ENCODE measurements at regions of chr2 and their contacts with region 1.

Region 1: GRCh38 chr2:207819839-207820784 is 50.4 kb upstream of the FZD5 start:
- DNase-seq: peak; percentile 97
- ATAC-seq: peak; percentile 89
- H3K4me3 ChIP-seq: peak overlapping the region; percentile 41 to 55 (median 53)
- H3K27ac ChIP-seq: peak overlapping the region; percentile 94
- H3K4me1 ChIP-seq: peaks cover 100% of the 10 kb centered on the region
- H3K27me3 ChIP-seq: no peaks in the 10 kb centered on the region
- CTCF ChIP-seq: no peak; the same call in 1 of the 2 replicates
- EP300 ChIP-seq: peak in 1 of 2 experiments; percentile 83; a peak in 3 of 4 replicates
- POLR2A ChIP-seq: peak; percentile 68 to 81
- RAD21 ChIP-seq: peak; percentile 40; the same call in 1 of the 2 replicates

Region 2: DNA sequence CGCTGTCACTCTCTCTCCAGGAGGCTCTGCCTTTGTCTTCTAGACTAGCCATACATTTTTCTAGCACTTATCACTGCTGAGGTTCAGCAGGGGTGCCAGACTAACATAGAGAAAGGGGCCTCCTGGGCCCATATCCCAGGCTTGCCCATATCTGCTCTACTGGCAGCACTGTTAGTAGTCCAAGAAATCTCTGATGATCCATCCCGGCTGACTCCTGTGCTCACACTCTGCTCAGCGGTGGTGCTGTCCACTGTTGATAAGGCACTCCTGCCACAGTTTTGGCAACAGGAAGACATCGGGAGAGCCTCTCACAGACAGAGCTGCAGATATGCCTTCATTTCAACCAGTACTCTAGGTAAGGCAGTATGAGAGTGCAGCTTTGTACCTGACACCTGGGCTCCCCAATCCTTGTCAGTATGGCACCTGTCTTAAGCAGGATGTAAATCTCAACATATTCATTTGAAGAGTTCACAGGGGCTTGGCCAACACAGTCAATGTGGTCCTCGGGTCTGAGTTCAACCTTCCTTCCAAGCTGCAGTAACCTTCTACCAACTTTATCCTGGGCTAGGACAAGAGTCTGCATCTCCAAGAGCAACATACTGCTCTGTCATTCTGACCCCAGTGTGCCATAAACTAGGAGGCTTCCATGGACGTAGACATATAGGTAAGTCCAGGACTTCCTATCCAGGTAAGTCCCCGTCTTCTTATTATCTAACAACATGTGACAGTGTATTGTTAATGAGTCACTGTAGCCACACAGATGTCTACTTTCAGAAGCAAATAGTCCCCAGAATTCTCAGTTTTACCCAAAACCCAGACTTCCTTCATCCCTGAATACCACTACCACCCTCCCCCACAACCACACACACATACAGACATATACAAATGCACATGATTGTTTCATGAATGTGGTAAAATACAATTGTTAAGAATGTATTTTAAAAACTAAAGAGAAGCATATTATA is 670.6 kb before region 1 on chr2:
- CTCF ChIA-PET with region 1: no interaction called
- POLR2A ChIA-PET with region 1: no interaction called
- in situ Hi-C with region 1: no loop called
- intact Hi-C with region 1: no loop called
- DNase-seq: no peak
- ATAC-seq: no peak
- H3K4me3 ChIP-seq: no peak overlapping the region
- H3K27ac ChIP-seq: no peak overlapping the region
- H3K4me1 ChIP-seq: no peaks in the 10 kb centered on the region
- H3K27me3 ChIP-seq: no peaks in the 10 kb centered on the region
- CTCF ChIP-seq: no peak
- EP300 ChIP-seq: no peak
- POLR2A ChIP-seq: no peak
- RAD21 ChIP-seq: no peak

Region 3: GRCh38 chr2:207782238-207783030 is 37.7 kb before region 1 on chr2:
- CTCF ChIA-PET with region 1: no interaction called
- POLR2A ChIA-PET with region 1: interaction called, 16 read pairs
- in situ Hi-C with region 1: no loop called
- intact Hi-C with region 1: no loop called
- DNase-seq: peak; percentile 92
- ATAC-seq: peak; percentile 96
- H3K4me3 ChIP-seq: no peak overlapping the region
- H3K27ac ChIP-seq: peak overlapping the region; percentile 1
- H3K4me1 ChIP-seq: peaks cover 96% of the 10 kb centered on the region
- H3K27me3 ChIP-seq: no peaks in the 10 kb centered on the region
- CTCF ChIP-seq: peak; percentile 13; the same call in 1 of the 2 replicates
- EP300 ChIP-seq: peak in 1 of 2 experiments; percentile 63; a peak in 2 of 4 replicates
- POLR2A ChIP-seq: no peak
- RAD21 ChIP-seq: peak; percentile 21; the same call in 1 of the 2 replicates

Region 4: DNA sequence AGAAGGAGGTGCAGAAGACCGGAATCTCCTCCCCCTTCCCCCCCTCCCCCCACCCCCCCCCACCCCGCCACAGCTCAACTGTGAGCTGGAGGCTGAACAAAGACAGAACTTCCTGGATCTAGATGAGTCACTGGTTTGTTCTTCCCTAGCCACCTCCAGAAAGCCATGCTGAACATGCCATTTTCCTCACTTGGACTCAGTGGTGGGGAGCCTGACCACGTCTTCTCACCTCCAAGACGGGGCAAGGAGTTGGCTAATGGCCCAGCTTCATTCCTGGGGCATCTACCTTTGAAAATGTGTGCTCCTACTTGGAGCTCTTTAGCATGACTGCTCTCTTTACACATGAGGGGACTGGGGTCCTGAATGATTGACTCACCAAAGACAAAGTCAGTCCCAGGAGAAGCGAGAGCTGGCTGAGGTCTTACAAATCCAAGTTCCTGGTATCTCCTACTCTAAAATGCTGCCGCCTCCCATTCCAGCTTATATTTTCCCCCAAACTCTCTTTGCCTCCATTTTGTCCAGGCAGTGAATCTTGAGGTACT is 27.8 kb before region 1 on chr2:
- CTCF ChIA-PET with region 1: no interaction called
- POLR2A ChIA-PET with region 1: interaction called, 42 read pairs
- in situ Hi-C with region 1: no loop called
- intact Hi-C with region 1: no loop called
- DNase-seq: peak; percentile 84
- ATAC-seq: peak; percentile 66
- H3K4me3 ChIP-seq: peak overlapping the region in 1 of 3 experiments; percentile 49; a peak in 2 of 6 replicates
- H3K27ac ChIP-seq: peak overlapping the region; percentile 82
- H3K4me1 ChIP-seq: peaks cover 73% of the 10 kb centered on the region
- H3K27me3 ChIP-seq: no peaks in the 10 kb centered on the region
- CTCF ChIP-seq: no peak
- EP300 ChIP-seq: peak in 1 of 2 experiments; percentile 16; a peak in 1 of 4 replicates
- POLR2A ChIP-seq: 0 out of 4 replicates have a peak, but pooled peaks have one; percentile 44 to 53
- RAD21 ChIP-seq: no peak

Region 5: GRCh38 chr2:207805566-207806226 is 14.4 kb before region 1 on chr2:
- CTCF ChIA-PET with region 1: no interaction called
- POLR2A ChIA-PET with region 1: interaction called, 49 read pairs
- in situ Hi-C with region 1: no loop called
- intact Hi-C with region 1: loop called (anchors 1 kb)
- DNase-seq: peak; percentile 39
- ATAC-seq: peak; percentile 15; the same call in 1 of the 3 replicates
- H3K4me3 ChIP-seq: no peak overlapping the region
- H3K27ac ChIP-seq: peak overlapping the region; percentile 43
- H3K4me1 ChIP-seq: peaks cover 61% of the 10 kb centered on the region
- H3K27me3 ChIP-seq: no peaks in the 10 kb centered on the region
- CTCF ChIP-seq: no peak
- EP300 ChIP-seq: no peak
- POLR2A ChIP-seq: no peak
- RAD21 ChIP-seq: no peak

Region 6: DNA sequence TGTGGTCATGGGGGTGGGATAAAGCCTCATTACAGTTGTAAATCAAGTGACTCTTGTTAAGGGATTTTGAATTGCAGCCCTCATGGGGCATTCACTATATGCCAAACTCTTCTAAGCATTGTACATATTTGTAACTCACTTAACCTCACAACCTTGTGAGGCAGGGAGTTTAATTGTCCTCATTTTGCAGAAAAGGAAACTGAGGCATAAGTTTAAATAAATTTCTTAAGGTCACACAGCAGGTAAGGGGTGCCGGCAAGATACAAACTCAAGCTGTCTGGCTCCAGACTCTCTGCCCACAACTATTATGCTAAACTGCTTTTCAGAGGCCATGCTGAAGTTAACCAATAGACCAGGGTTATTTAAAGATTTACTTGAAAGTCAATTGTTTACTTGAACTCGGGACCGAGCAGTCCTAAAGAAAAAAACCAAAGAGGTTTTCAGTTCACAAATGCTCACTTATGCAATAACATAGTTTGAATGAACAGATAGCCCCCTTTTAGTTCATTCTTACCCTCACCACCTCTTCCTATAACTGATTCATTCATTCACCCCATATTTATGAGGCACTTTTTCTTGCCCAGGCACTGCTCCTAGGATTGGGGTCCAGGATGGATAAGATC is 71.2 kb after region 1 on chr2:
- CTCF ChIA-PET with region 1: no interaction called
- POLR2A ChIA-PET with region 1: no interaction called
- in situ Hi-C with region 1: no loop called
- intact Hi-C with region 1: no loop called
- DNase-seq: peak; percentile 49
- ATAC-seq: peak; percentile 78
- H3K4me3 ChIP-seq: peak overlapping the region in 1 of 3 experiments; percentile 23; a peak in 2 of 6 replicates
- H3K27ac ChIP-seq: peak overlapping the region; percentile 29
- H3K4me1 ChIP-seq: peaks cover 60% of the 10 kb centered on the region
- H3K27me3 ChIP-seq: no peaks in the 10 kb centered on the region
- CTCF ChIP-seq: no peak
- EP300 ChIP-seq: peak in 1 of 2 experiments; percentile 59; a peak in 2 of 4 replicates
- POLR2A ChIP-seq: no peak
- RAD21 ChIP-seq: no peak

Region 7: DNA sequence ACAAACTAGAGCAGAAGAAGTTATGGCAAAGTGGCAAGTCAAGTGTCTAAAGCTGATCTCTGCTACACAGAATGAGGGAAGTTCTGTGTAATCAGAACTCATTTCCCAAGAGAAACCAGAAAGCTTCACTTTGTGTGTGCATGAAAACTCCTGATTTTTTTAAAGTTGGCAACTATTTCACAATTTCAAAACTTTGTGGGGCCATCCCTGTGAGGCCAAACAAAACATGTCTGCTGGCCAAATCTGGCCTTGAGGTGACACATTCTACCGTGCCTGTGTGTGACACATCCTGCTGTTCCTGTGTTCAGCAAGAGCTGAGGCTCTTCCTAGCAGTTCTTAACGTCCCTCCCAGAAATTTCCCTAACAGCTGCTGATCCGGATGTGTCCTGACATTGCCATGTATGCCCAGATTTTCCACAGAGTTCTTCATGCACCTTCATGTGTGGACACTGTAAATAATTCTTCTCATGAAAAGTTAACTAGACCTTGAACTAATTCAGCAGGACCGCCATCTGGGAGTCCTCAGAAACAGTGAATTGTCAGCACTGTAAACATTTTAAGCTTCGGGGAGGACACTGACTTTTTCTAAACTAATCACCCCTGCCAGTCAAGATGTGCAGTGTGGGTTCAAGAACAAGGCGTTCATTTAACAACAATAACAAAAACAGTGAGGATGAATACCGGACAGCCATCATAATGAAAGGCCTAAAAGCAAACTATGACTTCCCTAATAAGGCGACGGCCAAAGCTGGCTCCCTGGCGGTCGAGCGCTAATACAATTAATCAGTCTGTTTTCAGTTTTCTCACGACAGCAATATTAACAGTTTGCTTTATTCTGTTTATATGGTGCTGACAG is 106.2 kb after region 1 on chr2:
- CTCF ChIA-PET with region 1: no interaction called
- POLR2A ChIA-PET with region 1: interaction called, 15 read pairs
- in situ Hi-C with region 1: no loop called
- intact Hi-C with region 1: loop called (anchors 2 kb)
- DNase-seq: peak; percentile 96
- ATAC-seq: peak; percentile 97
- H3K4me3 ChIP-seq: peak overlapping the region in 2 of 3 experiments; percentile 5 to 18; a peak in 2 of 6 replicates
- H3K27ac ChIP-seq: peak overlapping the region; percentile 66
- H3K4me1 ChIP-seq: peaks cover 51% of the 10 kb centered on the region
- H3K27me3 ChIP-seq: no peaks in the 10 kb centered on the region
- CTCF ChIP-seq: no peak
- EP300 ChIP-seq: peak; percentile 53 to 79; a peak in 3 of 4 replicates
- POLR2A ChIP-seq: peak in 1 of 2 experiments; percentile 17; a peak in 1 of 4 replicates
- RAD21 ChIP-seq: no peak; the same call in 1 of the 2 replicates

Region 8: GRCh38 chr2:207974216-207974605 is 154.1 kb after region 1 on chr2:
- CTCF ChIA-PET with region 1: no interaction called
- POLR2A ChIA-PET with region 1: interaction called, 6 read pairs
- in situ Hi-C with region 1: no loop called
- intact Hi-C with region 1: loop called (anchors 1 kb)
- DNase-seq: no peak
- ATAC-seq: no peak
- H3K4me3 ChIP-seq: no peak overlapping the region
- H3K27ac ChIP-seq: no peak overlapping the region
- H3K4me1 ChIP-seq: peaks cover 28% of the 10 kb centered on the region
- H3K27me3 ChIP-seq: no peaks in the 10 kb centered on the region
- CTCF ChIP-seq: no peak
- EP300 ChIP-seq: no peak
- POLR2A ChIP-seq: no peak
- RAD21 ChIP-seq: no peak

Measured in HepG2 (cell line).